ENCODE measurements at regions of chr7 and their contacts with region 1.

Region 1: GRCh38 chr7:140810830-140811556 is 113.7 kb downstream of the BRAF start:
- DNase-seq: peak; percentile 67
- H3K4me3 ChIP-seq: no peak overlapping the region; a peak in 1 of 4 replicates
- H3K27ac ChIP-seq: no peak overlapping the region
- H3K4me1 ChIP-seq: peaks cover 0 to 7% of the 10 kb centered on the region in 2 experiments; a peak in 2 of 4 replicates
- H3K27me3 ChIP-seq: no peaks in the 10 kb centered on the region
- CTCF ChIP-seq: peak; percentile 95
- EP300 ChIP-seq: 0 out of 4 replicates have a peak, but pooled peaks of 1 of the 2 experiments have one; percentile 11
- RAD21 ChIP-seq: peak; percentile 89

Region 2: GRCh38 chr7:140673063-140673773 is 137.8 kb before region 1 on chr7:
- CTCF ChIA-PET with region 1: interaction called, 19 read pairs
- POLR2A ChIA-PET with region 1: no interaction called
- DNase-seq: peak; percentile 89
- H3K4me3 ChIP-seq: peak overlapping the region; percentile 64 to 74
- H3K27ac ChIP-seq: 0 out of 4 replicates have a peak overlapping the region, but pooled peaks of 1 of the 2 experiments have one; percentile 18
- H3K4me1 ChIP-seq: peaks cover 7 to 20% of the 10 kb centered on the region in 2 experiments; a peak in 2 of 4 replicates
- H3K27me3 ChIP-seq: no peaks in the 10 kb centered on the region
- CTCF ChIP-seq: no peak
- EP300 ChIP-seq: no peak
- RAD21 ChIP-seq: no peak

Region 3: DNA sequence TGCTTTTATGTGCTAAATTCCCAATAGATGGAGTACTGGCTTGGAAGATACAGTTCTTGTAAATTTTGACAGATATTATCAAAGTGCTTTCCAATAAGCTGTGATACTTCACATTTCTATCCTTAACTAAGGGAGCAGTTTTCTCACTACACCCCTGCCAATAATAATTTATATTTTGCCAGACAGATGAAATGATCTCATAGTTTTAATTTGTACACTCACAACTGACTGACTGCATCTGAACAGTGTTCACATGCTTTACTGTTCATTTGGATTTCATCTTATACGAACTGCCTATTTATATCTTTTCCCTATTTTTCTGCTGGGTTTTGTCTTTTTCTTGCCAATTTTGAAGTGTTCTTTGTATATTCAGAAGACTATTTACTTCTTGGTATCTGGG is 17.7 kb after region 1 on chr7:
- CTCF ChIA-PET with region 1: interaction called, 47 read pairs
- POLR2A ChIA-PET with region 1: no interaction called
- DNase-seq: no peak
- H3K4me3 ChIP-seq: no peak overlapping the region
- H3K27ac ChIP-seq: no peak overlapping the region
- H3K4me1 ChIP-seq: no peaks in the 10 kb centered on the region; a peak in 1 of 4 replicates
- H3K27me3 ChIP-seq: no peaks in the 10 kb centered on the region
- CTCF ChIP-seq: no peak
- EP300 ChIP-seq: no peak
- RAD21 ChIP-seq: no peak

Region 4: GRCh38 chr7:140863184-140863583 is 52.2 kb after region 1 on chr7:
- CTCF ChIA-PET with region 1: no interaction called
- POLR2A ChIA-PET with region 1: no interaction called
- DNase-seq: no peak
- H3K4me3 ChIP-seq: no peak overlapping the region
- H3K27ac ChIP-seq: no peak overlapping the region
- H3K4me1 ChIP-seq: no peaks in the 10 kb centered on the region; a peak in 1 of 4 replicates
- H3K27me3 ChIP-seq: no peaks in the 10 kb centered on the region
- CTCF ChIP-seq: no peak
- EP300 ChIP-seq: no peak
- RAD21 ChIP-seq: no peak

Region 5: DNA sequence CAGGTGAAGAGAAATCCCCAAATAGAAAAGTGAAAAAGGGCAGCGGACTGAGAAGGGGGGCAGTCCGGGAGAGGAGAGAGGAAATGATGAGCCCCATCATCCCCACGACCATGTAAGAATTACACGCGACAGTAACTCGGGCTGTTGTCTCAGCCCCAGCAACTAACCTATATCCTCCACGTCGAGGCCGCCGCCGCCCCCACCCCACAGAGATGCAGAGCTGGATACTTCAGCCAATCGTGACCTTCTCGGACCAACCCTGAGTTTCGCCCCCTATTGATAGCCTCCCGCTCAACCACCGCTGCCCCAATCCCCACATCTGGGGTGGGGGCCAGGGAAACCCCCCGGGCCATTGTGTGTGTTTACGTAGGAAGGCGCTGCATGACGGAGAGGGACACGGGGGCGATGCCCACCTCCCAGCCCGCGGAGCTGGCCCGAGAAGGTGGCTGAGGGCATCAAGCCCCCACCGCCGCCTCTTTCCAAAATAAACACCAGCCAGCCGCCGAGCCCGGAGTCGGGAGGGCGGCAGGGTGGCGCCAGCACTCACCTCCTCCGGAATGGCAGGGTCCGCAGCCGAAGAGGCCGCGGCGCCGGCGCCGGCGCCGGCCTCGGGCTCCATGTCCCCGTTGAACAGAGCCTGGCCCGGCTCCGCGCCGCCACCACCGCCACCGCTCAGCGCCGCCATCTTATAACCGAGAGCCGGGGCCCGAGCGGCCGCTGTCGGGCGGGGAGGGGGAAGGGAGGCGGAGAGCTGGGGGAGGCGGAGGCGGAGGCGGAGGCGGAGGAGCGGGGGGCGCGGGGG is 113.2 kb after region 1 on chr7:
- CTCF ChIA-PET with region 1: interaction called, 18 read pairs
- POLR2A ChIA-PET with region 1: interaction called, 10 read pairs
- DNase-seq: peak; percentile 94
- H3K4me3 ChIP-seq: peak overlapping the region; percentile 98 to 100
- H3K27ac ChIP-seq: peak overlapping the region; percentile 92 to 97
- H3K4me1 ChIP-seq: peaks cover 11 to 32% of the 10 kb centered on the region in 2 experiments; a peak in 3 of 4 replicates
- H3K27me3 ChIP-seq: no peaks in the 10 kb centered on the region
- CTCF ChIP-seq: peak; percentile 72
- EP300 ChIP-seq: no peak
- RAD21 ChIP-seq: peak; percentile 40

Region 6: GRCh38 chr7:141014524-141015395 is 203.8 kb after region 1 on chr7 and contains the start of gene MRPS33:
- CTCF ChIA-PET with region 1: interaction called, 177 read pairs
- POLR2A ChIA-PET with region 1: interaction called, 15 read pairs
- DNase-seq: peak; percentile 96
- H3K4me3 ChIP-seq: peak within 1 kb of the TSS; percentile 72 to 96
- H3K27ac ChIP-seq: peak within 1 kb of the TSS; percentile 78 to 93
- H3K4me1 ChIP-seq: peaks cover 6 to 16% of the 10 kb centered on the region in 2 experiments; a peak in 3 of 4 replicates
- H3K27me3 ChIP-seq: no peaks in the 10 kb centered on the region
- CTCF ChIP-seq: peak; percentile 86
- EP300 ChIP-seq: no peak; a peak in 2 of 4 replicates
- RAD21 ChIP-seq: no peak; the same call in 1 of the 2 replicates
- polyA plus RNA-seq, gene MRPS33: 88.8 and 95.5 TPM in 2 replicates

Region 7: DNA sequence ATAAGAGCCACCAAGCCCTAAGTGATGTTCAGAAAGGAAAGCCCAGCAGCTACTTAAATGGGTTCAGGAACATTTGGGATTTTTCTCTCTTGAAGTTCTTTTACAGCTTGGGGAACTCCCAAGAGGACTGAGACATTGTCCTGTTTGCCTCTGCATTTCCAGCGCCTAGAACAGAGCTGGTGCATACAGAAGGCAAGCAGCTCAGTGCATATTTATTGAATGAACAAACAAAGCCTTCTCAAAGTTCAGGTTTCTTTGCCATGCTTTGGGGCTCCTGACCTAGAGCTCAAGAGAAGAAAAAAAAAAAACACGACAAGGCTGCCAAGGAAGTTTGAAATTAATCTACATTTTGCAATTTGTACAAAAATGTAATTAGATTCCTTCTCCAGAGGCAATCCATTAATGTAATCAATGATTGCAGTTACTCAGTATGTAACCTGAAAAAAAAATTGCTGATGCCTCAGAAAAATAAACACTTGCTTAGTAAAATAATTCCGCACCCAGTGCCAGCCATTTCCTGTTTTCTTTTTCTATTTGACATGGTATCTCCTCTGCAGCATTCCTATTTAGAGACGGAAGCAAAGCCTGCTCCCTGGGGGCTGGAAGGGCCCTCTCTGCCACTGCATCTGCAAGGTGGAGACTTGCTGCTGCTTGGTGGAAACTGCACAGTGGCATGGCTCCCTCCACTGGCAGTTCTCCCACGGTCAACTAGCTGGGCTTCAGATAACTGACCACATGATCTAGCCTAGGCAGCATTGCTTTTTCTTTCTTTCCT is 420.2 kb after region 1 on chr7:
- CTCF ChIA-PET with region 1: interaction called, 12 read pairs
- POLR2A ChIA-PET with region 1: no interaction called
- DNase-seq: peak; percentile 72
- H3K4me3 ChIP-seq: no peak overlapping the region
- H3K27ac ChIP-seq: no peak overlapping the region
- H3K4me1 ChIP-seq: peaks cover 0 to 6% of the 10 kb centered on the region in 2 experiments; a peak in 2 of 4 replicates
- H3K27me3 ChIP-seq: no peaks in the 10 kb centered on the region
- CTCF ChIP-seq: no peak
- EP300 ChIP-seq: no peak
- RAD21 ChIP-seq: peak; percentile 86